ENCODE measurements at regions of chr10 and their contacts with region 1.

Region 1: GRCh38 chr10:101214446-101215396 is 14.5 kb downstream of the LBX1 start:
- DNase-seq: peak; percentile 80
- ATAC-seq: peak; percentile 84
- H3K4me3 Mint-ChIP-seq: no peak overlapping the region
- H3K27ac Mint-ChIP-seq: no peak overlapping the region
- H3K4me1 Mint-ChIP-seq: peaks cover 24% of the 10 kb centered on the region
- H3K27me3 Mint-ChIP-seq: peaks cover 68% of the 10 kb centered on the region

Region 2: GRCh38 chr10:101161494-101162299 is 53.0 kb before region 1 on chr10:
- CTCF ChIA-PET with region 1: interaction called, 15 read pairs
- POLR2A ChIA-PET with region 1: no interaction called
- DNase-seq: peak; percentile 77
- ATAC-seq: peak; percentile 88
- H3K4me3 Mint-ChIP-seq: no peak overlapping the region
- H3K27ac Mint-ChIP-seq: no peak overlapping the region
- H3K4me1 Mint-ChIP-seq: peaks cover 4% of the 10 kb centered on the region
- H3K27me3 Mint-ChIP-seq: peaks cover 52% of the 10 kb centered on the region

Region 3: DNA sequence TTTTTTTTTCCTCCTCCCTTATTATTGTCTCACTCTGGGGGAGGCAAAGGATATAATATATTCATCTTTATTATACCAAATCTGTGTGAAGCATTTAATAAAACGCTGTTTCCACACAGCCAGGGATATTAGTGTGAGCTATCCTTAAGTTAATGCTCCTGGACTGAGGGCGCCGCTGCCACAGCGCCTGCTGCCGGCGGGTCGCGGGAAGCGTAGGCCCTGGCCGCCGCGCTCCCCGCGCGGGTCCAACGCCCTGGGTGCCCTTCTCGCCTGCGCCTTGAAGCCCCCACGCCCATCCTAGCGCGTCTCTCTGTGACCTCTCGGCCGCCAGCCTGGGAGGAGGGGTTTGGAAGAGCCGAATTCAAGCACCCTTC is 24.0 kb after region 1 on chr10:
- CTCF ChIA-PET with region 1: interaction called, 40 read pairs
- POLR2A ChIA-PET with region 1: no interaction called
- DNase-seq: no peak
- ATAC-seq: peak; percentile 72
- H3K4me3 Mint-ChIP-seq: no peak overlapping the region
- H3K27ac Mint-ChIP-seq: no peak overlapping the region
- H3K4me1 Mint-ChIP-seq: peaks cover 6% of the 10 kb centered on the region
- H3K27me3 Mint-ChIP-seq: peaks cover 64% of the 10 kb centered on the region

Region 4: DNA sequence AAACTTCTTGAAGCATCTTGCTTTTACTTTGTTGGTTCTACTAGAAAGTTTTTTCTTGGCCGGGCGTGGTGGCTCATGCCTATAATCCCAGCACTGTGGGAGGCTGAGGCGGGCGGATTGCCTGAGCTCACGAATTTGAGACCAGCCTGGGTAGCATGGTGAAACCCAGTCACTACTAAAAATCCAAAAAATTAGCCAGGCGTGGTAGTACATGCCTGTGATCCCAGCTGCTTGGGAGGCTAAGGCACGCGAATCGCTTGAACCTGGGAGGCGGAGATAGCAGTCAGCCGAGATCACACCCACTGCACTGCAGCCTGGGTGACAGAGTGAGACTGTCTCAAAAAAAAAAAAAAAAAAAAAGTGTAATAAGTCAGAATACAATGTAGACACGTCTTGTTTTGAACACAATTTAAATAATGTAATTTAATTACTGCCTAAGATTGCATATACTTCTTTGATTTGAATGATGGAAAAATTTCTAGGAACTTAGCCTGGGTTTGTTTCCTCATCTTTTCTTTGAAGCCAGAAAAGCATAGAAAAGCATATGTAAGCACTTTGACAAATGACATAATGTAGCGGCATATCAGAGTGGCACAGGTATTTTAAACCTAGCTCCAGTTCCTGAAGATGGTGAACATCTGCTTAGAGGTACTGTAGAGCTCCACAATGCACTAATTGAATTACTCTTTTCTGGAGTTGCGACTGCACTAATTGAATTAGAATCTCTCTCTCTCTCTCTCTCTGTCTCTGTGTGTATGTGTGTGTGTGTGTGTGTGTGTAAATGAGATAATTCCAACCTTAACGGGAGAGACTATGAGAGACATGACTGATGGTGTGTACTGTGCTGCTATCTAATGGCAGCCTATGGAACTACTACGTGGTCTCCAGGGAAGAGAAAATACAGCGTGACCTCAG is 227.1 kb after region 1 on chr10:
- CTCF ChIA-PET with region 1: interaction called, 17 read pairs
- POLR2A ChIA-PET with region 1: no interaction called
- DNase-seq: peak; percentile 31
- ATAC-seq: peak; percentile 81
- H3K4me3 Mint-ChIP-seq: no peak overlapping the region
- H3K27ac Mint-ChIP-seq: no peak overlapping the region
- H3K4me1 Mint-ChIP-seq: peaks cover 3% of the 10 kb centered on the region
- H3K27me3 Mint-ChIP-seq: peaks cover 3% of the 10 kb centered on the region

Region 5: GRCh38 chr10:101467286-101467770 is 252.6 kb after region 1 on chr10:
- CTCF ChIA-PET with region 1: interaction called, 38 read pairs
- POLR2A ChIA-PET with region 1: no interaction called
- DNase-seq: peak; percentile 47
- ATAC-seq: peak; percentile 80
- H3K4me3 Mint-ChIP-seq: no peak overlapping the region
- H3K27ac Mint-ChIP-seq: no peak overlapping the region
- H3K4me1 Mint-ChIP-seq: peaks cover 4% of the 10 kb centered on the region
- H3K27me3 Mint-ChIP-seq: peaks cover 5% of the 10 kb centered on the region

Region 6: DNA sequence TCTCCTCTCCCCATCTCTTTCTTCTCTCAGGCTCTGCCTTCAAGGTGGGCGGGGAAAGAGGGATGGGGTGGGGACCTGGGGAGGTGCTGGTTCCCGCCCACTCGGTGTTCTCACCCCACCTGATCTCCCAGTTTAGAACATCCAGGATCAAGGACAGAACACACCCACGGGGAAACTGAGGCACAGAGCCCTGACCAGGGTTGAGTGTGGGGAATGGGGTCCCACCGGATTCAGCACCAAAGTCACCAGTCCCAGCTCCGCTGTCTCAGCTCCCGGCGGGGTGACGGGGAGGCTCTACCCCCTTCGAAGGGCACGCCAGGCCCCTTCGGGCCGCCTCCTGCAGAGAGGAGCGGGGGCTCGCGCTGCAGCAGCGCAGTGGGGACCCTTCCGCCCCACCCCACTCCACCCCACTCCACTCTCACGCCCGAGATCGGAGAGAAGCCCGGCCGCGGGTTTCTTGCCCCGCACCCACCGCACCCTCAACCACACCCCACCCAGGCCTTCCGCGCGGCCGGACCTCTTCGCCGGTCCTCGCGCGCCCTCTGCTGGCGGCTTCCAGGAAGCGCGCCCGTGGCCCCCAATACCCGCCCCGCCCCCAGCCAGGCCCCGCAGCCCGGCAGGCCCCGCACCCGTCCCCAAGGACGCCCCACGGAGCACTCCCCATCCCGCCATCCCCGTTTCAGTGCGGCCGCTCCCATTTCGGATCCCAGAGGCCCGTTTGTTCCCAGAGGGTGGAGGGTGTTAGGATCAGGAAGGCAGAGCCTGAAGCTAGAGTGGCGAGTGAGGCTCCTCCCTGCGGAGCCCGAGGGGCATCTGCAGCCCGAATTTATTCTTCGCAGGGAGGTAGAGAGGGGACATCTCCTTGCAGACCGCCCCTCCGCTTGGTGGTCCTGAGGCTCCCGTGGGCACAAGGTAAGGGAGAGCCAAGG is 355.4 kb after region 1 on chr10:
- CTCF ChIA-PET with region 1: interaction called, 59 read pairs
- POLR2A ChIA-PET with region 1: no interaction called
- DNase-seq: peak; percentile 85
- ATAC-seq: peak; percentile 87
- H3K4me3 Mint-ChIP-seq: peak overlapping the region; percentile 69
- H3K27ac Mint-ChIP-seq: no peak overlapping the region
- H3K4me1 Mint-ChIP-seq: peaks cover 20% of the 10 kb centered on the region
- H3K27me3 Mint-ChIP-seq: peaks cover 49% of the 10 kb centered on the region

Measured in activated CD8-positive, alpha-beta T cell treated with anti-CD3 and anti-CD28 coated beads, Interleukin-2, amount 10 ng/mL, durations not matched to agents 7 days and 5 days (primary cell).